ENCODE measurements at regions of chr6 and their contacts with region 1.

Region 1: DNA sequence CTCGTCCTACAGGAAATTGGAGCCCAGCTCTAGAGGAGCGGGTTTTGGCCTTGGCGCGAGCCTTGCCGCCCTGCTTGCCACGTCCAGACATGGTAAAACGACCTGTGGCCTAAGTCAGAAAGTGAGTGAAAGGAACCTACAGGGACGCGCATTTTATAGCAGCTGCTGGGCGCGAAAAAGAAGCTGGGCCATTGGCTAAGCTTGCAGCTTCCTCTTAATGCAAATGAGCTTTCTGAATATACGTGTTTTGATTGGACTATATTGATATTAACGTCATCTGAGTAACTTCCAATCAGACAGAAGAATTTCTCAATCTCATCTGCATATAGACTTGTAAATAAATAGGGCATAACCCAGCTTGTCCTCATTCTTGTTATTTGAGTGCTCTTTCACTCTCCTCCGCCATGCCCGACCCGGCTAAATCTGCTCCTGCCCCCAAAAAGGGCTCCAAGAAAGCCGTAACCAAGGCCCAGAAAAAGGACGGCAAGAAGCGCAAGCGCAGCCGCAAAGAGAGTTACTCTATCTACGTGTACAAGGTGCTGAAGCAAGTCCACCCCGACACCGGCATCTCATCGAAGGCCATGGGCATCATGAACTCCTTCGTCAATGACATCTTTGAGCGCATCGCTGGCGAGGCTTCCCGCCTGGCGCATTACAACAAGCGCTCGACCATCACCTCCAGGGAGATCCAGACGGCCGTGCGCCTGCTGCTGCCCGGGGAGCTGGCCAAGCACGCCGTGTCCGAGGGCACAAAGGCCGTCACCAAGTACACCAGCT is 18.9 kb downstream of the OR2B2 start:
- DNase-seq: peak; percentile 69 to 96 (median 90)
- ATAC-seq: peak; percentile 72 to 78
- H3K4me3 Mint-ChIP-seq: no peak overlapping the region
- H3K27ac Mint-ChIP-seq: no peak overlapping the region
- H3K4me1 Mint-ChIP-seq: peaks cover 7 to 38% (median 28%) of the 10 kb centered on the region in 4 donors
- H3K27me3 Mint-ChIP-seq: no peaks in the 10 kb centered on the region

Region 2: DNA sequence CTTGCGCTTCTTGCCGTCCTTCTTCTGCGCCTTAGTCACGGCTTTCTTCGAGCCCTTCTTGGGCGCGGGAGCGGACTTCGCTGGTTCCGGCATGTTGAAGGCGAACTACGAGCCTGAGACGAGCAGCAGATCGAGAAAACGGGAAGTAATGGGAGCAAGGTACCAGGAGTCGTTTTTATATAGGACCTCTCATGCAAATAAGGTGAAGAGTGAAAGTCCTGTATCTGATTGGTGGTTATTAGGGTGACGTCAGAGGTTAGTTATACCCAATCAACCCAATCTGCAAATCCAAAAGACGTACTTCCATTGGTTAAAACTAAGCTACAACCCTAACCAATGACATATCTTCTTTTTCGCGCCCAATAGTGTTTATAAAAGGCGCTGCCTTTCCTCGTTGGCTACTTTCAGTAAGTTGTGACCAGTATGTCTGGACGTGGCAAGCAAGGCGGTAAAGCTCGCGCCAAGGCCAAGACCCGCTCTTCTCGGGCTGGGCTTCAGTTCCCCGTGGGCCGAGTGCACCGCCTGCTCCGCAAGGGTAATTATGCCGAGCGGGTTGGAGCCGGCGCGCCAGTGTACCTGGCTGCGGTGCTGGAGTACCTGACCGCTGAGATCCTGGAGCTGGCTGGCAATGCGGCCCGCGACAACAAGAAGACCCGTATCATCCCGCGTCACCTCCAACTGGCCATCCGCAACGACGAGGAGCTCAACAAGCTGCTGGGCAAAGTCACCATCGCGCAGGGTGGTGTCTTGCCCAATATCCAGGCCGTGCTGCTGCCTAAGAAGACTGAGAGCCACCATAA is 746.3 kb before region 1 on chr6:
- POLR2A ChIA-PET with region 1: interaction called, 62 read pairs
- DNase-seq: peak; percentile 37 to 94 (median 82)
- ATAC-seq: peak; percentile 85 to 88
- H3K4me3 Mint-ChIP-seq: no peak overlapping the region
- H3K27ac Mint-ChIP-seq: no peak overlapping the region
- H3K4me1 Mint-ChIP-seq: peaks cover 3 to 25% (median 12%) of the 10 kb centered on the region in 4 donors
- H3K27me3 Mint-ChIP-seq: no peaks in the 10 kb centered on the region

Region 3: DNA sequence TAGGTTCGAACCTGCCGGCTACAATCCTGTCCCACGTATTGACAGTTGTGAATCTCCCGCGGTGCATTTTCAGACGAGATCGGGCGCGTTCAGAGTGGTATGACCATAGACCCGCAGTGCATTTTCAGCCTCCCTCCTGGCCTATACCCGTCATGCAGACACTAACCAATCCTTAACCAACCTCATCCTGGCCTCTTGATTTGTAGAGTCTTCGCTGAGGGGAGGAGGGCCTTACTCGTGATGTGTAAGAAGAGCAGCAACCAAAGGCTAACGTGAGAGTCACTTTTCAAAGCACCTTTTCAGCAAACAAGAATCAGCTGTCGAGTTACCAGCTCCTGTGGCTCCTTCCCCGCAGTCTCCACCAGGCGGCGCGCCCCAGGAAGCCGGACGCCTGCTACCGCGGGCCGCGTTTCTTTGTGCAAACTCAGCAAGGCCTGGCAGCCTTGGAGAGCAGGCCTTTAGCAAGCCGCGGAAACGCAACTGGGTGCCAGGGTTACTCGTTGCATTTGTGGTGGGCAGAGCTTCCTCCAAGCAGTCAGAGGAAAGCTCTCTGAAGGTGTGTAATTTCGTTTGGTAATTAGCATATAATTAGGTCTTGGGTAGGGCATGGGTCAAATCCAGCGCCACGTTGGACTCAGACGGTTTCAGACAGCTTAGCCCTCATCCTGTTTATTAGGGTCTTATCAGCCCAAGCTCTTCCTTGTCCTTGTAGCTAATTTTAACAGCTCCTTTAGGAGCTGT is 120.8 kb before region 1 on chr6:
- POLR2A ChIA-PET with region 1: interaction called, 39 read pairs
- DNase-seq: peak; percentile 73 to 91 (median 82)
- ATAC-seq: peak; percentile 98 to 100
- H3K4me3 Mint-ChIP-seq: peak overlapping the region in 4 of 10 donors; percentile 37 to 58 (median 48)
- H3K27ac Mint-ChIP-seq: peak overlapping the region in 5 of 10 donors; percentile 56 to 73 (median 67)
- H3K4me1 Mint-ChIP-seq: peaks cover 8 to 28% (median 9%) of the 10 kb centered on the region in 4 donors
- H3K27me3 Mint-ChIP-seq: peaks cover 2 to 18% (median 7%) of the 10 kb centered on the region in 5 donors

Region 4: DNA sequence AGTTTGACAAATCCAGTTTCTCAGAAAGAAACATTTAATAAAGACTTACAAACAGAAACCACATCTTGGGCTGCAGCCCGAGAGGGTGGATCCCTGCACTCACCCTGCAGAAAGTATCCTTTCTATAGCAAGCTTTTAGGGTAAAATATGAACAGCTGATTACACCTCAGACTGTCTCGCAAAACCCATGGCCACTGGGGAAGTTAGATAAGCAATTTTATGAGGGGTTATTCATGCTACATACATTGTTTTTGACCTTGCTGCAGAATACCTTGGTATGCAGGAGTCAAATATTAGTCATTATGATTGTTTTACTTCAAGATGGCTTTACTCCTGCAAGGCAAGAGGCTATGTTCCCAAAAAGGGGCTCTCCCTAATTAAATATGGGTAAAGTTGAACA is 108.0 kb before region 1 on chr6:
- POLR2A ChIA-PET with region 1: no interaction called
- DNase-seq: no peak
- ATAC-seq: no peak
- H3K4me3 Mint-ChIP-seq: no peak overlapping the region
- H3K27ac Mint-ChIP-seq: no peak overlapping the region
- H3K4me1 Mint-ChIP-seq: no peaks in the 10 kb centered on the region
- H3K27me3 Mint-ChIP-seq: peaks cover 7 to 30% (median 16%) of the 10 kb centered on the region in 5 donors

Region 5: GRCh38 chr6:27825025-27825793 is 68.0 kb before region 1 on chr6:
- POLR2A ChIA-PET with region 1: interaction called, 144 read pairs
- DNase-seq: peak in 1 of 10 donors; percentile 40
- ATAC-seq: no peak
- H3K4me3 Mint-ChIP-seq: peak overlapping the region; percentile 83 to 99 (median 92)
- H3K27ac Mint-ChIP-seq: peak overlapping the region; percentile 96 to 100 (median 97)
- H3K4me1 Mint-ChIP-seq: peaks cover 8 to 43% (median 31%) of the 10 kb centered on the region in 4 donors
- H3K27me3 Mint-ChIP-seq: no peaks in the 10 kb centered on the region

Region 6: DNA sequence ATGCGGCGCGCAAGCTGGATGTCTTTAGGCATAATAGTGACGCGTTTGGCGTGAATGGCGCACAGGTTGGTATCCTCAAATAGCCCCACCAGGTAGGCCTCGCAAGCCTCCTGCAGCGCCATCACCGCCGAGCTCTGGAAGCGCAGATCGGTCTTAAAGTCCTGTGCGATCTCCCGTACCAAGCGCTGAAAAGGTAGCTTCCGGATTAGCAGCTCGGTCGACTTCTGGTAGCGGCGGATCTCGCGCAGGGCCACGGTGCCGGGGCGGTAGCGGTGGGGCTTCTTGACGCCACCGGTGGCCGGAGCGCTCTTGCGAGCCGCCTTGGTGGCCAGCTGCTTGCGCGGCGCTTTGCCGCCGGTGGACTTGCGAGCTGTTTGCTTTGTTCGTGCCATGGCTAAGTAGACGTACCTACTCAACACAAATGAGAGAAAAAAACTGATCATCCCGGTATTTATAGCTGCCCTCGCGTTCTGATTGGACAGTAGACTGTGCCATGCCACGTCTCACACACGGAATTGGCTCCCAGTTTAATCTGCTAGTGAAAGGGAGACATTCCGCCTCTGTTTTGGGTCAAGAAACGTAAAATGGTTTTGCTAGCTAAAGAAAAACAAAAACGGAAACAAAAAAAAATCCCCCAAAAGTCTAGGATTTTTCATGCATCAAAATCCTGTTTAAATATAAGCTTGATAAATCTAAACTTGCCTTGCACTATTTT is 21.2 kb before region 1 on chr6:
- POLR2A ChIA-PET with region 1: interaction called, 445 read pairs
- DNase-seq: peak; percentile 57 to 99 (median 91)
- ATAC-seq: peak; percentile 78 to 79
- H3K4me3 Mint-ChIP-seq: peak overlapping the region; percentile 86 to 95 (median 92)
- H3K27ac Mint-ChIP-seq: peak overlapping the region; percentile 89 to 99 (median 96)
- H3K4me1 Mint-ChIP-seq: peaks cover 21 to 46% (median 38%) of the 10 kb centered on the region in 4 donors
- H3K27me3 Mint-ChIP-seq: no peaks in the 10 kb centered on the region